ENCODE measurements at regions of chr22 and their contacts with region 1.

Region 1: DNA sequence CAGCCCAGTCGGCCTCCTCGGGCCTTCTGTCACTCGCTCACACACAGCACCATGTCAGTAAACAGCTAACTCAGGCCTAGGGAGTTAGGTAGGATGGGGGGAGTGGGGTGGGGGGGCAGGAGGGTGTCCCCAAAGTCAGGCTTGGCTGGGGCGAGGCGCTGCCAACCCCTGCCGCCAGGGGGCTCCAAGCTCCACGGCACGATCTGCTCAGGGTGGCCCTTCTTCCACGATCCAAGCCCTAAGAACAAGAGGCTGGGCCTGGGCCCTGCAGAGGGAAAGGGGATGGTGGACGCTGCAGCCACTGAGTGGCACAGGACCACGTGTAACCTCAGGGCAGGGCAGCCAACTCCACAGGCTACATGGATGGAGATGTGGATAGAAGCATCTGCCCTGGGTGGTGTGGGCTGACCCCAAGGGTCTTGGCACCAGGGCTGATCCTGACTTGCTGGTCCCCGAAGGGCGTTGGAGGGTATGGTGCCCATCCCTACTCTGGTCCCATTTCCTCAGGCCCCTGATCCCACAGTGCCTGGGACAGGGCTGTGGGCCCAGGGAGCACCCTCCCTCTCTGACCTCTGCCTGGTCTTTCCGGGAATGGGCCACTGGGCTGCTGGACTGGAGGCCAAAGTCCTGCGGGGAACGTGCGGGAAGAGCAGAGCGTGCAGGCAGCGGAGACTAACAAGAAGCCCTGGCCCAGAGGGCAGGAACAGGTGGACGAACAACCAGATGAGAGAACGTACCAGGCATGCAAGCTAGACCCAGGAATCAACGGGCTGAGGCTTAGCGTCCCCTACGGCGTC is 29.1 kb upstream of the TXNRD2 start:
- DNase-seq: peak; percentile 55
- ATAC-seq: peak; percentile 82
- H3K4me3 ChIP-seq: no peak overlapping the region
- H3K27ac ChIP-seq: no peak overlapping the region
- H3K4me1 ChIP-seq: peaks cover 6% of the 10 kb centered on the region; the same call in 1 of the 2 replicates
- H3K27me3 ChIP-seq: no peaks in the 10 kb centered on the region
- CTCF ChIP-seq: peak; percentile 72

Region 2: GRCh38 chr22:20027966-20028854 is 57.5 kb after region 1 on chr22:
- CTCF ChIA-PET with region 1: no interaction called
- POLR2A ChIA-PET with region 1: interaction called, 10 read pairs
- intact Hi-C with region 1: loop called (anchors 1 kb)
- DNase-seq: peak; percentile 21
- ATAC-seq: peak; percentile 57
- H3K4me3 ChIP-seq: no peak overlapping the region
- H3K27ac ChIP-seq: no peak overlapping the region
- H3K4me1 ChIP-seq: no peaks in the 10 kb centered on the region
- H3K27me3 ChIP-seq: no peaks in the 10 kb centered on the region
- CTCF ChIP-seq: peak; percentile 38; the same call in 1 of the 2 replicates

Region 3: GRCh38 chr22:20405931-20406685 is 435.4 kb after region 1 on chr22:
- CTCF ChIA-PET with region 1: no interaction called
- POLR2A ChIA-PET with region 1: no interaction called
- intact Hi-C with region 1: no loop called
- DNase-seq: no peak
- ATAC-seq: no peak
- H3K4me3 ChIP-seq: no peak overlapping the region
- H3K27ac ChIP-seq: no peak overlapping the region
- H3K4me1 ChIP-seq: no peaks in the 10 kb centered on the region
- H3K27me3 ChIP-seq: no peaks in the 10 kb centered on the region
- CTCF ChIP-seq: no peak